CD14-positive monocyte (primary cell): ENCODE measurements at regions of chr19 and their contacts with region 1.

Region 1: GRCh38 chr19:55385740-55386529 is at the start of gene RPL28:
- DNase-seq: peak; percentile 98 to 99 (median 98)
- H3K4me3 ChIP-seq: peak within 1 kb of the TSS; percentile 85 to 95 (median 92)
- H3K4me3 Mint-ChIP-seq: peak within 1 kb of the TSS; percentile 100
- H3K27ac ChIP-seq: peak within 1 kb of the TSS; percentile 63 to 93
- H3K27ac Mint-ChIP-seq: peak within 1 kb of the TSS; percentile 96 to 99 (median 97)
- H3K4me1 ChIP-seq: peaks cover 43 to 56% of the 10 kb centered on the region in 2 donors
- H3K4me1 Mint-ChIP-seq: peaks cover 62% of the 10 kb centered on the region
- H3K27me3 ChIP-seq: no peaks in the 10 kb centered on the region
- H3K27me3 Mint-ChIP-seq: peaks cover 2 to 14% (median 6%) of the 10 kb centered on the region in 3 donors
- CTCF ChIP-seq: no peak
- polyA plus RNA-seq, gene RPL28: 199 to 3,862 (median 208) TPM

Region 2: DNA sequence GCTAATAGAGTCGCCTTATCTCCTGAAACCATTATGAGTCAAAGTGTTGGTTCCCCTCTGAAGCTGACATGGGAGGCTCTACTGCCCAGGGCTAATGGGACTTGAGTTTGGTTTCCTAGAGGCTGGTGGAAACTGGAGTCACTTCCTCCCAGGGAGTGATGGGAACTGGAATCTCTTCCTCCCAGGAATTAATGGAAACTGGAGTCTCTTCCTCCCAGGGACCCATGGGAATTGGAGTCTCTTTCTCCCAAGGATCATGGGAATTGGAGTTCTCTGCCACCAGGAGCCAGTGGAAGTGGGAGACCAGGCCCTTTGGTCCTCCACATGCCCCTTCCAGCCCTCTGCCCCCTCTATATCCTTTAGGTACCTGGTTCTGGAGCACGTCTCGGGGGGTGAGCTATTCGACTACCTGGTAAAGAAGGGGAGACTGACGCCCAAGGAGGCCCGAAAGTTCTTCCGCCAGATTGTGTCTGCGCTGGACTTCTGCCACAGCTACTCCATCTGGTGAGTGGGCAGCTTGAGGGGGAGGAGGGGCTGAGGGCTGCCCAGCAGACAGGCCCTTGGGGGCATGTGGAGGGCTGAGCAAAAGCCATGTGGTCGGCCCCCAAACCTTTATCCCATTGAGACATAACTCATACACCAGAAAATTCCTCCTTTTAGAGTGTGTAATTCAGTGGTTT is 96.7 kb before region 1 on chr19:
- intact Hi-C with region 1: loop called in 1 of 2 experiments (anchors 5 kb)
- DNase-seq: no peak
- H3K4me3 ChIP-seq: no peak overlapping the region
- H3K4me3 Mint-ChIP-seq: no peak overlapping the region
- H3K27ac ChIP-seq: no peak overlapping the region
- H3K27ac Mint-ChIP-seq: no peak overlapping the region
- H3K4me1 ChIP-seq: no peaks in the 10 kb centered on the region
- H3K4me1 Mint-ChIP-seq: no peaks in the 10 kb centered on the region
- H3K27me3 ChIP-seq: no peaks in the 10 kb centered on the region
- H3K27me3 Mint-ChIP-seq: peaks cover 10 to 13% (median 13%) of the 10 kb centered on the region in 3 donors
- CTCF ChIP-seq: no peak

Region 3: GRCh38 chr19:55301459-55302317 is 84.2 kb before region 1 on chr19:
- intact Hi-C with region 1: loop called (anchors 5 kb)
- DNase-seq: peak; percentile 78 to 92 (median 85)
- H3K4me3 ChIP-seq: peak overlapping the region in 2 of 3 experiments; percentile 26 to 65
- H3K4me3 Mint-ChIP-seq: peak overlapping the region; percentile 66 to 79
- H3K27ac ChIP-seq: no peak overlapping the region
- H3K27ac Mint-ChIP-seq: peak overlapping the region in 3 of 7 donors; percentile 25 to 72 (median 30)
- H3K4me1 ChIP-seq: peaks cover 10 to 12% of the 10 kb centered on the region in 2 donors
- H3K4me1 Mint-ChIP-seq: peaks cover 13% of the 10 kb centered on the region
- H3K27me3 ChIP-seq: no peaks in the 10 kb centered on the region
- H3K27me3 Mint-ChIP-seq: peaks cover 0 to 13% (median 3%) of the 10 kb centered on the region in 3 donors
- CTCF ChIP-seq: peak; percentile 95

Region 4: GRCh38 chr19:55319785-55320184 is 66.2 kb before region 1 on chr19:
- intact Hi-C with region 1: loop called in 1 of 2 experiments (anchors 5 kb)
- DNase-seq: no peak
- H3K4me3 ChIP-seq: no peak overlapping the region
- H3K4me3 Mint-ChIP-seq: no peak overlapping the region
- H3K27ac ChIP-seq: no peak overlapping the region
- H3K27ac Mint-ChIP-seq: peak overlapping the region in 1 of 7 donors; percentile 66
- H3K4me1 ChIP-seq: peaks cover 35 to 42% of the 10 kb centered on the region in 2 donors
- H3K4me1 Mint-ChIP-seq: peaks cover 36% of the 10 kb centered on the region
- H3K27me3 ChIP-seq: no peaks in the 10 kb centered on the region
- H3K27me3 Mint-ChIP-seq: peaks cover 0 to 1% (median 0%) of the 10 kb centered on the region in 3 donors
- CTCF ChIP-seq: no peak

Region 5: GRCh38 chr19:55339048-55339888 is 46.7 kb before region 1 on chr19 and contains the start of gene KMT5C:
- intact Hi-C with region 1: loop called (anchors 2 to 5 kb)
- DNase-seq: peak; percentile 100
- H3K4me3 ChIP-seq: peak within 1 kb of the TSS; percentile 48 to 83 (median 69)
- H3K4me3 Mint-ChIP-seq: peak within 1 kb of the TSS; percentile 82 to 90
- H3K27ac ChIP-seq: peak within 1 kb of the TSS; percentile 97 to 99
- H3K27ac Mint-ChIP-seq: peak within 1 kb of the TSS; percentile 97 to 99 (median 99)
- H3K4me1 ChIP-seq: peaks cover 31 to 39% of the 10 kb centered on the region in 2 donors
- H3K4me1 Mint-ChIP-seq: peaks cover 27% of the 10 kb centered on the region
- H3K27me3 ChIP-seq: no peaks in the 10 kb centered on the region
- H3K27me3 Mint-ChIP-seq: peaks cover 0 to 5% (median 2%) of the 10 kb centered on the region in 3 donors
- CTCF ChIP-seq: peak; percentile 12
- polyA plus RNA-seq, gene KMT5C: 0.89 to 26.9 (median 1.5) TPM

Region 6: DNA sequence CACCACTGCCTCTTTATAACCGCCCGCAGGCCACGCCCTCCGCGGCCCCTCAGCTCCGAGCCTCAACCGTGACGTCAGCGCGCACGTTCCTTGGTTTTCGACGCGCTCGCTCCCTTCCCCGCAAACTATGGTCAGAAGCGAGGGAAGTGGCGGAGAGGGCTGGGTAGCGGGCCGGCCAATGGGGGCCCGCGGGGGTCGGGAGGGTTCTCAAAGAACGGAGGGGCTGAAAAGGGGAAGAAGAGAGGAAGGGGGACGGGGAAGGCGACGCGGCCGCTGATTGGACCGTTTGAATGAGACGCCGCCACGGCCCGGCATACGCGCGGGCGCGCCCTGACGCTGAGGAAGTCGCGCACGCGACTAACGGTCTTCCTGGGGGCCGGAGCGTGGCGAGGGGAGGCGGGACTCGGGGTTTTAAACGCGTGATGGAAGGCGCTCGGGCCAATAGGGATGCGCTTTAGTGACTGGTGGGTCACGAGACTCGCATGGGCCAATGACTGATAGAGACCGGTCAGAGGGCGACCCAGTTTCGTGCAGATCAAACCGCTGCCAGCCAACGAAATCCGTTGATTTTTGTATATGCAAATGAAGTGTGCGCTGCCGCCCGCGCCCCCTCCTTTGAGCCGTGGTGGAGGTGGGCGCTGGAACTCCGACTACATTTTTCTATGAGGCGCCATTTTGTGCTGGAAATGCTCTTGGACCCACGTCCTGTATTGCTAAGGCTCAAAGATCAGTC is 22.0 kb after region 1 on chr19:
- intact Hi-C with region 1: loop called (anchors 1 to 2 kb)
- DNase-seq: peak; percentile 99 to 100 (median 100)
- H3K4me3 ChIP-seq: peak overlapping the region; percentile 32 to 86 (median 37)
- H3K4me3 Mint-ChIP-seq: peak overlapping the region; percentile 84 to 91
- H3K27ac ChIP-seq: peak overlapping the region; percentile 95 to 96
- H3K27ac Mint-ChIP-seq: peak overlapping the region; percentile 96 to 98 (median 97)
- H3K4me1 ChIP-seq: peaks cover 22 to 31% of the 10 kb centered on the region in 2 donors
- H3K4me1 Mint-ChIP-seq: peaks cover 26% of the 10 kb centered on the region
- H3K27me3 ChIP-seq: no peaks in the 10 kb centered on the region
- H3K27me3 Mint-ChIP-seq: peaks cover 3 to 6% (median 4%) of the 10 kb centered on the region in 3 donors
- CTCF ChIP-seq: no peak

Region 7: DNA sequence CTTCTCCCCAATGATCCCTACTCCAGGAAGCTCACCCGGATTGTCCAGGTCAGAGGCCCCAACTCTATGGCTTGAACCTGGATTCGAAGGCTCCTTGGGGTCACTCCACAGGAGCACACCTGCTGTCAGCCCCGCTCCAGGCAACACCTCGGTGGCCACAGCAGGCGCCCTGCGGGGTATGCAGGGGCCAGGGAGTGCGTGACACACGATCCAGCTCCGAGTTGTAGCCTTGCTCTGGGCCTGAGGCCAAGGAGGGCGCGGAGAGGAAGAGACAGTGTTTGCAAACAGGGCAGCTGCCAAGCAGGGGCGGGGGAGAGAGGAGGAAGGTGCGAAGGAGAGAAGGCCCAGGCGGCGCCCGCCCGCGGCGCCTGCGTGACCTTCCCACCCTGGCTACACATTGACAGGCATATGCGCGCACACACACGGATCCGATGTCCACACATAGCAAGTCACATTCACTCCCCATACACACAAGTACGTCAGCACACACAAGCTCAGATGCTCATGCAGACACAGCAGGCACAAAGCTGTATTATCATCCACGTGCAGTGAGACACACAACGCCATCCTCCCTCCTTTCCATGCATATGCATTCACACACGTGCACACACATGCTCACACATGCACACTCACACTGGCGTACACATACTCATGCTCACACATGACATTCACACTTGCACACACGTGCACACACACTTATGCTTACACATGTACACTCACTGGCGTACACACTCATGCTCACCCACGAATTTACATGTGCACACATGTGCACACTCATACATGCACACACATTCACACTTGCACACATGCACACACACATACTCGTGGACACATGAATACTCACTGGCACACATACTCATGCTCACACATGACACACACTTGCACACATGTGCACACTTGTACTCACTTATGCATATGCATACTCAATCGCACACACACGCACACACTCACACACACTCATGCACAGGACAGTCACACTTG is 140.6 kb after region 1 on chr19:
- intact Hi-C with region 1: no loop called
- DNase-seq: no peak
- H3K4me3 ChIP-seq: no peak overlapping the region
- H3K4me3 Mint-ChIP-seq: no peak overlapping the region
- H3K27ac ChIP-seq: no peak overlapping the region
- H3K27ac Mint-ChIP-seq: no peak overlapping the region
- H3K4me1 ChIP-seq: no peaks in the 10 kb centered on the region
- H3K4me1 Mint-ChIP-seq: no peaks in the 10 kb centered on the region
- H3K27me3 ChIP-seq: no peaks in the 10 kb centered on the region
- H3K27me3 Mint-ChIP-seq: peaks cover 2 to 4% (median 4%) of the 10 kb centered on the region in 3 donors
- CTCF ChIP-seq: no peak